Ascending aorta (tissue), 2 donors: ENCODE measurements at regions of chr7 and their contacts with region 1.

Region 1: GRCh38 chr7:129825496-129826267 is 127.1 kb downstream of the UBE2H start:
- DNase-seq: peak in 1 of 2 donors; percentile 93
- H3K4me3 ChIP-seq: peak overlapping the region; percentile 65 to 82
- H3K27ac ChIP-seq: peak overlapping the region; percentile 69 to 74
- H3K4me1 ChIP-seq: peaks cover 0 to 23% of the 10 kb centered on the region in 2 donors
- H3K27me3 ChIP-seq: no peaks in the 10 kb centered on the region
- CTCF ChIP-seq: peak; percentile 76 to 97 (median 95)

Region 2: DNA sequence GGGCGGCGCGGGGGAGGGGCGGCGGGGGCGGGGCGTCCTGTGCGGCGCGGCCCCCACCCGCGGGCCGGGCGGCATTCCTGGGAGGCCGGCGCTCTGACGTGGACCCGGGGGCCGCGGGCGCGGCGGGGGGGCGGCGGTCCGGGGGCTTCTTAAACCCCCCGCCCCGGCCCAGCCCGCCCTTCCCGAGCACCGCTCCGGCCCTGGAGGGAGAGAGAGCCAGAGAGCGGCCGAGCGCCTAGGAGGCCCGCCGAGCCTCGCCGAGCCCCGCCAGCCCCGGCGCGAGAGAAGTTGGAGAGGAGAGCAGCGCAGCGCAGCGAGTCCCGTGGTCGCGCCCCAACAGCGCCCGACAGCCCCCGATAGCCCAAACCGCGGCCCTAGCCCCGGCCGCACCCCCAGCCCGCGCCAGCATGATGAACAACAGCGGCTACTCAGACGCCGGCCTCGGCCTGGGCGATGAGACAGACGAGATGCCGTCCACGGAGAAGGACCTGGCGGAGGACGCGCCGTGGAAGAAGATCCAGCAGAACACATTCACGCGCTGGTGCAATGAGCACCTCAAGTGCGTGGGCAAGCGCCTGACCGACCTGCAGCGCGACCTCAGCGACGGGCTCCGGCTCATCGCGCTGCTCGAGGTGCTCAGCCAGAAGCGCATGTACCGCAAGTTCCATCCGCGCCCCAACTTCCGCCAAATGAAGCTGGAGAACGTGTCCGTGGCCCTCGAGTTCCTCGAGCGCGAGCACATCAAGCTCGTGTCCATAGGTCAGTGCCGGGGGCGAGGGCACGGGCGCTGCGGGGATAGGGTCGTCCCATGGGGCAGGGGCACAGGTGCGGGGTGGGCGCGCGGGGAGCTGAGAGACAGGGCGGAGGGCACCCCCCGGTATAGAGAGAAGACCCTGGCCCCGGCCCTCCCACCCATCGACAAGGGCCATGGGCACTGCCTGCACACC is 995.2 kb before region 1 on chr7 and contains the start of gene FLNC:
- intact Hi-C with region 1: loop called (anchors 5 kb)
- DNase-seq: peak in 1 of 2 donors; percentile 82
- H3K4me3 ChIP-seq: peak within 1 kb of the TSS; percentile 71 to 88
- H3K27ac ChIP-seq: peak within 1 kb of the TSS; percentile 92 to 95
- H3K4me1 ChIP-seq: peaks cover 11 to 37% of the 10 kb centered on the region in 2 donors
- H3K27me3 ChIP-seq: no peaks in the 10 kb centered on the region
- CTCF ChIP-seq: no peak
- total RNA-seq, gene FLNC: 117 TPM

Region 3: GRCh38 chr7:129611246-129612111 is 214.2 kb before region 1 on chr7 and contains the start of gene NRF1:
- intact Hi-C with region 1: loop called (anchors 5 kb)
- DNase-seq: peak; percentile 45 to 93
- H3K4me3 ChIP-seq: peak within 1 kb of the TSS; percentile 69 to 91
- H3K27ac ChIP-seq: peak within 1 kb of the TSS; percentile 93 to 99
- H3K4me1 ChIP-seq: peaks cover 6 to 26% of the 10 kb centered on the region in 2 donors
- H3K27me3 ChIP-seq: no peaks in the 10 kb centered on the region
- CTCF ChIP-seq: peak in 2 of 3 experiments; percentile 10 to 39
- total RNA-seq, gene NRF1: 3.1 TPM

Region 4: DNA sequence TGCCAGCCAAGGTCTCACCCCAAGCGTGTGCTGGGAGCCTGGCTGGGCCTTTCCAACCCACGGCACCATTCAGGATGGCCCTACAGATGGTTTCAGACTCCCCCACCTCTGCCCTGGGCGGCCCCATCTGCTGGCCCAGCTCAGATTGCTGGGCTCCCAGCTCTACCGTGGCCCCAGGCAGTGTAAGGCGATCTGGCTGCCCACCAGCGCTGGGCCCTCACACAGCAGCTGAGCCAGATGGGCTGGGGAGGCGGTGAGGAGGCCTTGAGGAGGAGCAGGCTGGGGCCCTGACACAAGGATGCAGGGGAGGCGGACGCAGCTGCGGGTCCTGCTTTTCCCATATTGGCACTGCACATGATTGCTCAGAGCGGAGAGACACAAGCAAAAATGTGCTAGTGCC is 51.3 kb before region 1 on chr7:
- intact Hi-C with region 1: no loop called
- DNase-seq: no peak
- H3K4me3 ChIP-seq: no peak overlapping the region
- H3K27ac ChIP-seq: no peak overlapping the region
- H3K4me1 ChIP-seq: peaks cover 7% of the 10 kb centered on the region in 2 donors
- H3K27me3 ChIP-seq: peaks cover 19% of the 10 kb centered on the region
- CTCF ChIP-seq: no peak

Region 5: GRCh38 chr7:129785685-129786514 is 39.8 kb before region 1 on chr7:
- intact Hi-C with region 1: no loop called
- DNase-seq: no peak
- H3K4me3 ChIP-seq: peak overlapping the region; percentile 5 to 39
- H3K27ac ChIP-seq: no peak overlapping the region
- H3K4me1 ChIP-seq: peaks cover 7 to 32% of the 10 kb centered on the region in 2 donors
- H3K27me3 ChIP-seq: peaks cover 38% of the 10 kb centered on the region
- CTCF ChIP-seq: no peak

Region 6: GRCh38 chr7:129845178-129845971 is 19.7 kb after region 1 on chr7:
- intact Hi-C with region 1: loop called (anchors 2 kb)
- DNase-seq: no peak
- H3K4me3 ChIP-seq: no peak overlapping the region
- H3K27ac ChIP-seq: peak overlapping the region; percentile 66 to 70
- H3K4me1 ChIP-seq: peaks cover 15 to 49% of the 10 kb centered on the region in 2 donors
- H3K27me3 ChIP-seq: no peaks in the 10 kb centered on the region
- CTCF ChIP-seq: no peak

Region 7: DNA sequence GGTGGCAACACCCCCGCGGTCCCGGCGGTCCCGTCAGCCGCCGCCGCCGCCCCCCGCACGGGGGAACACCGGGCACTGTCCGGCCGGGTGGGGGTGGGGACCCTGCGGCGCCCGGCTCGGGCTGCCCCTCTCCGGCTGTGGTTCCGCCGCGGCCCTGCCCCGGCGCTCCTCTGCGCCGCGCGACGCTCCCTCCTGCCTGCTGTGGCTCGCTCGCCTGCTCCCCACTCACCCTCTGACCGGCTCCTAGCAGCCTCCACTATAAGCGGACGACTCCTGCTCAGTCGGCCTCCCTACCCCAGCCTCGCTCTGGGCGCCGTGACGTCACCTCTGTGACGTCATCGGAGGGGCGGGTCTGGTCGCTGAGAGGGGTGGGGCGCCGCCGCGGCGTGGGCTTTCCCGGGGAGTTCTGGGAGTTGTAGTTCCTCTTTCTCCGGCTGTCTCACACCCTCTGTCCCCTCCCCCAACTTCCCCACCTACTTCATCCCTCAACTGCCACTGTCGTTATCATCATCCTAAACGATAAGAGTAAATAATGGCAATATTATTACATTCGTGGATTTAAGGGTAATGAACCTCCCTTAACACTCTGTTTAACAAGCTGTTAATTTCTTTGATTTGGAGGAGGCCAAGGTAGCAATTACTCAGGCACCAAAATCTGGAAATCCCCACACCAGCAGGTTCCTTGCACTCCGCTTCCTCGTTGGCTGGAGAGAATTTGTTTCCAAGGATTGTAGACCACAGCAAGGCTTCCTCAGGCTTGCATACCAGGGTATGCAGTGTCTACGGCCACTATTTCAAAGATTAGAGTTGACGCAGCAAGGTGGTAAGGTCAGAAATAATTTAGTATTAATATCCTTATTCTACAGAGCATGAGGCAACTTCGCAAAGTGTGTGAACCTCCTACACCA is 127.2 kb after region 1 on chr7 and contains the start of gene UBE2H:
- intact Hi-C with region 1: loop called (anchors 2 kb)
- DNase-seq: peak; percentile 72 to 96
- H3K4me3 ChIP-seq: peak within 1 kb of the TSS; percentile 80 to 92
- H3K27ac ChIP-seq: peak within 1 kb of the TSS; percentile 91
- H3K4me1 ChIP-seq: peaks cover 6 to 13% of the 10 kb centered on the region in 2 donors
- H3K27me3 ChIP-seq: no peaks in the 10 kb centered on the region
- CTCF ChIP-seq: no peak
- total RNA-seq, gene UBE2H: 83.9 TPM